ENCODE measurements at regions of chr16 and their contacts with region 1.

Region 1: GRCh38 chr16:62870554-62870953 is 834.3 kb upstream of the CDH8 start:
- DNase-seq: no peak
- H3K4me3 ChIP-seq: no peak overlapping the region
- H3K4me3 Mint-ChIP-seq: no peak overlapping the region
- H3K27ac ChIP-seq: no peak overlapping the region
- H3K27ac Mint-ChIP-seq: no peak overlapping the region
- H3K4me1 ChIP-seq: no peaks in the 10 kb centered on the region
- H3K4me1 Mint-ChIP-seq: no peaks in the 10 kb centered on the region
- H3K27me3 ChIP-seq: no peaks in the 10 kb centered on the region
- H3K27me3 Mint-ChIP-seq: no peaks in the 10 kb centered on the region

Region 2: GRCh38 chr16:62225697-62226280 is 644.8 kb before region 1 on chr16:
- CTCF ChIA-PET with region 1: no interaction called
- POLR2A ChIA-PET with region 1: no interaction called
- intact Hi-C with region 1: loop called (anchors 5 kb)
- DNase-seq: no peak
- H3K4me3 ChIP-seq: no peak overlapping the region
- H3K4me3 Mint-ChIP-seq: no peak overlapping the region
- H3K27ac ChIP-seq: no peak overlapping the region
- H3K27ac Mint-ChIP-seq: no peak overlapping the region
- H3K4me1 ChIP-seq: no peaks in the 10 kb centered on the region
- H3K4me1 Mint-ChIP-seq: no peaks in the 10 kb centered on the region
- H3K27me3 ChIP-seq: no peaks in the 10 kb centered on the region
- H3K27me3 Mint-ChIP-seq: no peaks in the 10 kb centered on the region

Region 3: GRCh38 chr16:62700426-62701294 is 169.9 kb before region 1 on chr16:
- CTCF ChIA-PET with region 1: no interaction called
- POLR2A ChIA-PET with region 1: no interaction called
- intact Hi-C with region 1: no loop called
- DNase-seq: no peak
- H3K4me3 ChIP-seq: no peak overlapping the region
- H3K4me3 Mint-ChIP-seq: no peak overlapping the region
- H3K27ac ChIP-seq: no peak overlapping the region
- H3K27ac Mint-ChIP-seq: no peak overlapping the region
- H3K4me1 ChIP-seq: no peaks in the 10 kb centered on the region
- H3K4me1 Mint-ChIP-seq: no peaks in the 10 kb centered on the region
- H3K27me3 ChIP-seq: no peaks in the 10 kb centered on the region
- H3K27me3 Mint-ChIP-seq: no peaks in the 10 kb centered on the region

Region 4: GRCh38 chr16:62882552-62883221 is 12.1 kb after region 1 on chr16:
- CTCF ChIA-PET with region 1: no interaction called
- POLR2A ChIA-PET with region 1: no interaction called
- intact Hi-C with region 1: no loop called
- DNase-seq: no peak
- H3K4me3 ChIP-seq: no peak overlapping the region
- H3K4me3 Mint-ChIP-seq: no peak overlapping the region
- H3K27ac ChIP-seq: no peak overlapping the region
- H3K27ac Mint-ChIP-seq: no peak overlapping the region
- H3K4me1 ChIP-seq: no peaks in the 10 kb centered on the region
- H3K4me1 Mint-ChIP-seq: no peaks in the 10 kb centered on the region
- H3K27me3 ChIP-seq: no peaks in the 10 kb centered on the region
- H3K27me3 Mint-ChIP-seq: no peaks in the 10 kb centered on the region

Measured in CD4-positive, alpha-beta memory T cell (primary cell).